ENCODE measurements at regions of chr13 and their contacts with region 1.

Region 1: GRCh38 chr13:32315238-32316027 is at the starts of genes BRCA2 and ZAR1L:
- DNase-seq: peak; percentile 81
- ATAC-seq: peak; percentile 95
- H3K4me3 ChIP-seq: peak within 1 kb of the TSS; percentile 86
- H3K27ac ChIP-seq: peak within 1 kb of the TSS; percentile 88
- H3K4me1 ChIP-seq: peaks cover 22% of the 10 kb centered on the region
- H3K27me3 ChIP-seq: no peaks in the 10 kb centered on the region
- CTCF ChIP-seq: no peak
- total RNA-seq, gene BRCA2: 9.1 and 16.8 TPM in 2 replicates
- total RNA-seq, gene ZAR1L: not detected in 2 replicates

Region 2: GRCh38 chr13:32427852-32428580 is 112.6 kb after region 1 on chr13 and contains the start of gene N4BP2L1:
- CTCF ChIA-PET with region 1: no interaction called
- POLR2A ChIA-PET with region 1: interaction called, 3 read pairs
- intact Hi-C with region 1: loop called (anchors 10 kb)
- DNase-seq: peak; percentile 32
- ATAC-seq: peak; percentile 70
- H3K4me3 ChIP-seq: peak within 1 kb of the TSS; percentile 80
- H3K27ac ChIP-seq: no peak within 1 kb of the TSS
- H3K4me1 ChIP-seq: peaks cover 8% of the 10 kb centered on the region; the same call in 1 of the 2 replicates
- H3K27me3 ChIP-seq: no peaks in the 10 kb centered on the region
- CTCF ChIP-seq: no peak
- total RNA-seq, gene N4BP2L1: 0.15 and 0.17 TPM in 2 replicates

Region 3: DNA sequence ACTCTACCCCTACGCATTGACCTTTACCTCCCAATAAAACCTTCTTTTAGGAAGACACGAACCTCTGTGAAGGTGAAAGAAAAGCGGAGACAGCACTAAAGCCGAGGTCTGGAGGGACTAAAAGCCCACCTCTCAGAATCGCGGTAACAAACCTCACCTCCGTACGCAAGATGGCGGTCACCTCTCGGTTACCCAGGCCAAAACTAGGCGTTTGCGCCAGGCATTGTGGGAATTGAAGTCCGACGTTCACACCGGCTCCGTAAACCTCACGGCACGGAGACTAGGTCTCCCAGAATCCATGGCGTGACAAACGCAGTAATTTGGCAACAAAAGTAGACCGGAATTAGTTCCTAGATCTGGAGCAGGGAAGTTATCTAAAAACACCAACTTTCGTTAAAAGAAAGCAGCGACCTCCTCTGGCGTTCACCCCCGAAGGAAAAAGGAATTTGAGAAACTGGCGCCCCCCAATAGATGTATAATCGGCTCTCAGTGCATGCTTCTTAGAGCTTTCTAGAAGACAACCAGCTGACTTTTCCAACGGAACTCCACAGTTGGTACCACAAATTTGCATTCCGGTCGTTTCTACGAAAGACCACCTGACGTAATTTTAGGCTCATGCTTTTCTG is 223.3 kb after region 1 on chr13 and contains the start of gene N4BP2L2:
- CTCF ChIA-PET with region 1: no interaction called
- POLR2A ChIA-PET with region 1: no interaction called
- intact Hi-C with region 1: loop called (anchors 5 kb)
- DNase-seq: peak; percentile 95
- ATAC-seq: peak; percentile 99
- H3K4me3 ChIP-seq: peak within 1 kb of the TSS; percentile 85
- H3K27ac ChIP-seq: peak within 1 kb of the TSS; percentile 65
- H3K4me1 ChIP-seq: peaks cover 20% of the 10 kb centered on the region; the same call in 1 of the 2 replicates
- H3K27me3 ChIP-seq: no peaks in the 10 kb centered on the region
- CTCF ChIP-seq: peak; percentile 45; the same call in 1 of the 2 replicates
- total RNA-seq, gene N4BP2L2: 31.7 and 51.4 TPM in 2 replicates

Measured in PC-3 (cell line).